CD4-positive, alpha-beta memory T cell (primary cell): ENCODE measurements at regions of chr1 and their contacts with region 1.

Region 1: GRCh38 chr1:192516776-192517297 is 58.7 kb upstream of the RGS1 start:
- DNase-seq: peak; percentile 83 to 90 (median 86)
- H3K4me3 ChIP-seq: no peak overlapping the region
- H3K4me3 Mint-ChIP-seq: peak overlapping the region; percentile 56 to 83 (median 76)
- H3K27ac ChIP-seq: peak overlapping the region; percentile 35
- H3K27ac Mint-ChIP-seq: peak overlapping the region; percentile 81 to 98 (median 94)
- H3K4me1 ChIP-seq: peaks cover 28% of the 10 kb centered on the region
- H3K4me1 Mint-ChIP-seq: peaks cover 28 to 47% (median 38%) of the 10 kb centered on the region in 4 donors
- H3K27me3 ChIP-seq: no peaks in the 10 kb centered on the region
- H3K27me3 Mint-ChIP-seq: no peaks in the 10 kb centered on the region

Region 2: GRCh38 chr1:192485693-192486436 is 31.0 kb before region 1 on chr1:
- CTCF ChIA-PET with region 1: no interaction called
- POLR2A ChIA-PET with region 1: no interaction called
- intact Hi-C with region 1: no loop called
- DNase-seq: no peak
- H3K4me3 ChIP-seq: no peak overlapping the region
- H3K4me3 Mint-ChIP-seq: no peak overlapping the region
- H3K27ac ChIP-seq: no peak overlapping the region
- H3K27ac Mint-ChIP-seq: peak overlapping the region in 1 of 7 donors; percentile 62
- H3K4me1 ChIP-seq: no peaks in the 10 kb centered on the region
- H3K4me1 Mint-ChIP-seq: peaks cover 0 to 3% (median 0%) of the 10 kb centered on the region in 4 donors
- H3K27me3 ChIP-seq: no peaks in the 10 kb centered on the region
- H3K27me3 Mint-ChIP-seq: no peaks in the 10 kb centered on the region

Region 3: DNA sequence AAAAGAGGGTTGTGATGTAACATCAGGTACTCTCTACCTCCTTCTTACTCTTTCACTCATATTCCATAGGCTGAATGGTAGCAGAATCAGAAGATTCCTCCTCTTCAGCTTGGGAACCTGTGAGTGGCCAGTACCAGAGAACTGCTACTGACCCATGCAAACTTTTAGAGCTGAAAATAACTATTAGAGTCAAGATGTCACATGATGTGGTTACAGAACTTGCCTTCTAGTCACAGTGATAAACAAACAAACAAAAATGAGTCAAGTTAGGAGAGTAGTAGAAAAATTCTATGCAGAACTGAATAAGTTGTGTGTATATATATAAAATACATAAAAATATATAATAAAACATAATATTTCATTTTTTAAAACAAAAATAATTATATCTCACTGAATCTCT is 11.1 kb after region 1 on chr1:
- CTCF ChIA-PET with region 1: interaction called, 5 read pairs
- POLR2A ChIA-PET with region 1: interaction called, 5 read pairs
- intact Hi-C with region 1: loop called (anchors 1 kb)
- DNase-seq: no peak
- H3K4me3 ChIP-seq: no peak overlapping the region
- H3K4me3 Mint-ChIP-seq: no peak overlapping the region
- H3K27ac ChIP-seq: no peak overlapping the region
- H3K27ac Mint-ChIP-seq: no peak overlapping the region
- H3K4me1 ChIP-seq: peaks cover 18% of the 10 kb centered on the region
- H3K4me1 Mint-ChIP-seq: peaks cover 17 to 33% (median 25%) of the 10 kb centered on the region in 4 donors
- H3K27me3 ChIP-seq: no peaks in the 10 kb centered on the region
- H3K27me3 Mint-ChIP-seq: no peaks in the 10 kb centered on the region

Region 4: DNA sequence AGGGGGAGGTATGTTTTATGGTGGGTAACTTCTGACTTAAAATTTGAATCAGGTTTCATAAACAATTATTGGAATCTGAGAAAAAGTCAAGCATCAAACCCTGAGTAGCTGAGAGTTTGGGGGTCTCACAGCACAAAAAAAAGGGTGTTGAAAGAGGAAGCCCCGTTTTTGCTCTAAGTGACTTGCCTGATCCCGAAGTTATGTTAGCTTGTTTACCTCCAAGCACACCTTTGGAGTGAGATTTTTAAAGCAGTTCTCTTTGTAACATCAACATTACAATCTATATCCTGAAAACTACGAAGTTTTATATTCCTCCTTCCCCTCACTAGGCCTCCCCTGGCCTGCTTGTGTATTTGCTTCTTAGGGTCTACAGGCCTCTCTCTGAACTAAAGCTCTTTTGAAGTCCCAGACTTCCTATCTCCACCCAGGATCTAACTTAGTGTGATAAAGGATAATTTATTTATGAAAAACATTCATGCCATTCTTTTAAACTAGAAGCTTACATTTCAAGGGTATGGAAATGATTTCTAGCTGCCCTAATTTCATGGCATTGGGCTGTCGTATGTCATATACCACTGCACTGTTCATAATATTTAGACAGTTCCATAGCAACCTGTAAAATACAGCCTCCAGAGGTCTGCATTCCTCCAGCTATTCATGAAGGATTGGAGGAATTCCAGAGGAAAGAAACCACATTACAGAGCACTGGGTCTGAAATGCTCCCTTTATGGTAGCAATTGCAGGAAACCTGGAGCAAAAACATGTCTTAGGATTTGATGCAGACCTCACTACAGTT is 22.7 kb after region 1 on chr1:
- CTCF ChIA-PET with region 1: interaction called, 3 read pairs
- POLR2A ChIA-PET with region 1: interaction called, 11 read pairs
- intact Hi-C with region 1: no loop called
- DNase-seq: no peak
- H3K4me3 ChIP-seq: no peak overlapping the region
- H3K4me3 Mint-ChIP-seq: peak overlapping the region; percentile 13 to 83 (median 54)
- H3K27ac ChIP-seq: peak overlapping the region; percentile 15
- H3K27ac Mint-ChIP-seq: peak overlapping the region; percentile 73 to 97 (median 94)
- H3K4me1 ChIP-seq: peaks cover 46% of the 10 kb centered on the region
- H3K4me1 Mint-ChIP-seq: peaks cover 28 to 52% (median 41%) of the 10 kb centered on the region in 4 donors
- H3K27me3 ChIP-seq: no peaks in the 10 kb centered on the region
- H3K27me3 Mint-ChIP-seq: no peaks in the 10 kb centered on the region